ENCODE measurements at regions of chr13 and their contacts with region 1.

Region 1: GRCh38 chr13:41668130-41668757 is 210.9 kb downstream of the RGCC start:
- DNase-seq: no peak
- H3K4me3 ChIP-seq: no peak overlapping the region
- H3K27ac ChIP-seq: peak overlapping the region in 2 of 4 donors; percentile 29 to 32
- H3K4me1 ChIP-seq: peaks cover 0 to 33% (median 24%) of the 10 kb centered on the region in 4 donors
- H3K27me3 ChIP-seq: no peaks in the 10 kb centered on the region
- CTCF ChIP-seq: peak; percentile 75 to 89 (median 80)
- EP300 ChIP-seq: no peak
- POLR2A ChIP-seq: no peak

Region 2: GRCh38 chr13:41833201-41833600 is 165.0 kb after region 1 on chr13:
- intact Hi-C with region 1: loop called (anchors 5 kb)
- DNase-seq: no peak
- H3K4me3 ChIP-seq: no peak overlapping the region
- H3K27ac ChIP-seq: no peak overlapping the region
- H3K4me1 ChIP-seq: peaks cover 0 to 3% (median 1%) of the 10 kb centered on the region in 4 donors
- H3K27me3 ChIP-seq: no peaks in the 10 kb centered on the region
- CTCF ChIP-seq: no peak
- EP300 ChIP-seq: no peak
- POLR2A ChIP-seq: no peak

Region 3: GRCh38 chr13:41960639-41961465 is 292.6 kb after region 1 on chr13 and contains the start of gene VWA8:
- intact Hi-C with region 1: loop called (anchors 5 kb)
- DNase-seq: peak; percentile 94
- H3K4me3 ChIP-seq: peak within 1 kb of the TSS; percentile 78 to 96 (median 93)
- H3K27ac ChIP-seq: peak within 1 kb of the TSS; percentile 82 to 91 (median 89)
- H3K4me1 ChIP-seq: peaks cover 16 to 34% (median 28%) of the 10 kb centered on the region in 4 donors
- H3K27me3 ChIP-seq: no peaks in the 10 kb centered on the region
- CTCF ChIP-seq: no peak
- EP300 ChIP-seq: no peak
- POLR2A ChIP-seq: no peak
- total RNA-seq, gene VWA8: 19.5 to 26.2 (median 21.6) TPM

Region 4: GRCh38 chr13:42039946-42040729 is 371.9 kb after region 1 on chr13:
- intact Hi-C with region 1: loop called (anchors 5 kb)
- DNase-seq: peak; percentile 98
- H3K4me3 ChIP-seq: peak overlapping the region; percentile 78 to 90 (median 88)
- H3K27ac ChIP-seq: peak overlapping the region; percentile 96 to 99 (median 98)
- H3K4me1 ChIP-seq: peaks cover 9 to 24% (median 23%) of the 10 kb centered on the region in 4 donors
- H3K27me3 ChIP-seq: no peaks in the 10 kb centered on the region
- CTCF ChIP-seq: peak in 1 of 3 experiments; percentile 21
- EP300 ChIP-seq: no peak
- POLR2A ChIP-seq: peak; percentile 63

Region 5: GRCh38 chr13:42110410-42111155 is 442.3 kb after region 1 on chr13:
- intact Hi-C with region 1: loop called (anchors 2 kb)
- DNase-seq: no peak
- H3K4me3 ChIP-seq: no peak overlapping the region
- H3K27ac ChIP-seq: no peak overlapping the region
- H3K4me1 ChIP-seq: peaks cover 0 to 18% (median 13%) of the 10 kb centered on the region in 4 donors
- H3K27me3 ChIP-seq: no peaks in the 10 kb centered on the region
- CTCF ChIP-seq: peak; percentile 78 to 87 (median 80)
- EP300 ChIP-seq: no peak
- POLR2A ChIP-seq: no peak